Caco-2 (cell line): ENCODE measurements at regions of chr19 and their contacts with region 1.

Region 1: DNA sequence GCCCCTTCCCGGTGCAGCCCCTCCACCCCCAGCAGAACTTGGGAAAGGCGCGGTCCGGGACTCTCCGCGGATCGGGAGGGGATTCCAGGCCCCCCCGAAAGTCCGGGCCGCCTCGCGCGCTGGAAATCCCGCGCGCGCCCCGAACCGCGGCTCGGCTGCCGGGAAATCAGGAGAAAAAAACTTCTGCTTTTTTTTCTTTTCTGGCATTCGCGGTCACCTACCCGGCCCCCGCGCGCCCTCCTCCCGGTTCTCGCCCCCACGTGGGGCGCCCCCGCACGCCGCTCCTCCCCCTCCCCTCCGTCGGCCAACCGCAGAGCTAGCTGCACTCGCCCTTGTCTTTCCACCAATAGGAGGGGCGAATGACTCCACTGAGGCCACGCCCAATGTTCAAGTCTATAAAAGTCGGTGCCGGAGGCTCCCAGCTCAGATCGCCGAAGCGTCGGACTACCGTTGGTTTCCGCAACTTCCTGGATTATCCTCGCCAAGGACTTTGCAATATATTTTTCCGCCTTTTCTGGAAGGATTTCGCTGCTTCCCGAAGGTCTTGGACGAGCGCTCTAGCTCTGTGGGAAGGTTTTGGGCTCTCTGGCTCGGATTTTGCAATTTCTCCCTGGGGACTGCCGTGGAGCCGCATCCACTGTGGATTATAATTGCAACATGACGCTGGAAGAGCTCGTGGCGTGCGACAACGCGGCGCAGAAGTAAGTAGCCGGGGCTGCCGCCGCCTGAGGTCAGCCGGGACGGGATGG is at the start of gene GADD45B:
- DNase-seq: peak; percentile 98
- H3K4me3 ChIP-seq: peak within 1 kb of the TSS; percentile 79
- H3K4me3 Mint-ChIP-seq: peak within 1 kb of the TSS; percentile 88
- H3K27ac Mint-ChIP-seq: peak within 1 kb of the TSS; percentile 91
- H3K4me1 ChIP-seq: no peaks in the 10 kb centered on the region
- H3K4me1 Mint-ChIP-seq: no peaks in the 10 kb centered on the region
- H3K27me3 ChIP-seq: no peaks in the 10 kb centered on the region
- H3K27me3 Mint-ChIP-seq: no peaks in the 10 kb centered on the region
- CTCF ChIP-seq: no peak
- total RNA-seq, gene GADD45B: 20.2 and 23.8 TPM in 2 replicates

Region 2: DNA sequence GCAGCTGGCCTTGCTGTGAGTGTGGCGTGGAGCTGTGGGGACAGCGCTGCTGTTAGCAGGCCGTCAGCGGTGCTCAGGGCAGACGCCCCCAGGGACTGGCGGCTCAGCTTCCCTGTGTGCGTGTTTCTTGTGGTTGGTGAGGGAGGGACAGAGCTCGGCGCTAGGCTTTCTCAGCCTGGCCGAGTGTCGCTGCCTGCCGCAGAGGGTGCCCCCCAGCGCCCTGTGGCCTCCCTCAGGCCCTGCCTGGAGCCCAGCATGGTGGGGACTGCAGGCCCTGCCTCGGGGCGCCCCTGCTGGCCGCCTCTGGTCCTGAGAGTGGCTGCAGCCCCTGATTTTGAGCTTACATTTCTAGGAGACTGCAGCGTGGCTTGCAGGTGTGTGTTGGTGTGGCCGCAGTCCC is 276.7 kb before region 1 on chr19:
- CTCF ChIA-PET with region 1: no interaction called
- POLR2A ChIA-PET with region 1: no interaction called
- intact Hi-C with region 1: no loop called
- DNase-seq: no peak
- H3K4me3 ChIP-seq: no peak overlapping the region
- H3K4me3 Mint-ChIP-seq: no peak overlapping the region
- H3K27ac Mint-ChIP-seq: no peak overlapping the region
- H3K4me1 ChIP-seq: no peaks in the 10 kb centered on the region
- H3K4me1 Mint-ChIP-seq: no peaks in the 10 kb centered on the region
- H3K27me3 ChIP-seq: no peaks in the 10 kb centered on the region
- H3K27me3 Mint-ChIP-seq: no peaks in the 10 kb centered on the region
- CTCF ChIP-seq: no peak

Region 3: GRCh38 chr19:2427429-2428320 is 48.2 kb before region 1 on chr19 and contains the start of gene TIMM13:
- CTCF ChIA-PET with region 1: no interaction called
- POLR2A ChIA-PET with region 1: interaction called, 15 read pairs
- intact Hi-C with region 1: no loop called
- DNase-seq: peak; percentile 96
- H3K4me3 ChIP-seq: peak within 1 kb of the TSS; percentile 68
- H3K4me3 Mint-ChIP-seq: peak within 1 kb of the TSS; percentile 93
- H3K27ac Mint-ChIP-seq: peak within 1 kb of the TSS; percentile 100
- H3K4me1 ChIP-seq: peaks cover 20% of the 10 kb centered on the region
- H3K4me1 Mint-ChIP-seq: peaks cover 5% of the 10 kb centered on the region
- H3K27me3 ChIP-seq: no peaks in the 10 kb centered on the region
- H3K27me3 Mint-ChIP-seq: no peaks in the 10 kb centered on the region
- CTCF ChIP-seq: no peak
- total RNA-seq, gene TIMM13: 200 and 217 TPM in 2 replicates

Region 4: DNA sequence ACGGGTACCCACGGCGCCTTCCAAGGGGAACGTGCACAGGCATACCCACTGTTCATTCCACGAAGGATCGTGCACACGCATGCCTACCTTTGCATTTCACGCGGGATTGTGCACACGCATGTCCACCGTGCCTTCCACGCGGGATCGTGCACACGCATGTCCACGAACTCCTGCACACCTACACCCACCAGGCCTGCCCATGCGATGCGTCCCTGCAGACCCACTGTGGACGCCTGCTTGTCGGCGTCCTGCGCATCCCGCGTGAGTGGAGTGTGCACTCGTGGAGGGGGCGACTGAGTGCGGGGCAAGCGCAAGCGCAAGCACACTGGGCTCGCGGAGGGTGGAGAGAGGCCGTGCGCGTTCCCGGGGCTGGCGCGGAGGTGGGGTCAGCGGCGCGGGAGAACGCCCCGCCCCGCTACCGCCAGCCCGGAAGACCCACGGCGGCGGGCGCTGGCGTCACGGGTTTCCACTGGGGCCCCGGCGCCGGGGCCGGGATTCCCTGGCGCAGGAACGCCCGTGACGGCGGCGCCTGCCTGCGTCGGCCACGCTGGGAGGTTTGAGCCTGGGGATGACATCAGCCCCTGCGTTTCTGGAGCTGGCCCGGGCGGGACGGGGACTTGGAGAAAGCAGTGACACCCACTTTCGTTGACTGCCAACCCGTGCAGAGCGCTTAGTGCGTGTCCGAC is 18.7 kb after region 1 on chr19:
- CTCF ChIA-PET with region 1: no interaction called
- POLR2A ChIA-PET with region 1: interaction called, 15 read pairs
- intact Hi-C with region 1: no loop called
- DNase-seq: no peak
- H3K4me3 ChIP-seq: peak overlapping the region; percentile 33
- H3K4me3 Mint-ChIP-seq: peak overlapping the region; percentile 15
- H3K27ac Mint-ChIP-seq: no peak overlapping the region
- H3K4me1 ChIP-seq: peaks cover 34% of the 10 kb centered on the region
- H3K4me1 Mint-ChIP-seq: peaks cover 9% of the 10 kb centered on the region
- H3K27me3 ChIP-seq: no peaks in the 10 kb centered on the region
- H3K27me3 Mint-ChIP-seq: no peaks in the 10 kb centered on the region
- CTCF ChIP-seq: no peak

Region 5: DNA sequence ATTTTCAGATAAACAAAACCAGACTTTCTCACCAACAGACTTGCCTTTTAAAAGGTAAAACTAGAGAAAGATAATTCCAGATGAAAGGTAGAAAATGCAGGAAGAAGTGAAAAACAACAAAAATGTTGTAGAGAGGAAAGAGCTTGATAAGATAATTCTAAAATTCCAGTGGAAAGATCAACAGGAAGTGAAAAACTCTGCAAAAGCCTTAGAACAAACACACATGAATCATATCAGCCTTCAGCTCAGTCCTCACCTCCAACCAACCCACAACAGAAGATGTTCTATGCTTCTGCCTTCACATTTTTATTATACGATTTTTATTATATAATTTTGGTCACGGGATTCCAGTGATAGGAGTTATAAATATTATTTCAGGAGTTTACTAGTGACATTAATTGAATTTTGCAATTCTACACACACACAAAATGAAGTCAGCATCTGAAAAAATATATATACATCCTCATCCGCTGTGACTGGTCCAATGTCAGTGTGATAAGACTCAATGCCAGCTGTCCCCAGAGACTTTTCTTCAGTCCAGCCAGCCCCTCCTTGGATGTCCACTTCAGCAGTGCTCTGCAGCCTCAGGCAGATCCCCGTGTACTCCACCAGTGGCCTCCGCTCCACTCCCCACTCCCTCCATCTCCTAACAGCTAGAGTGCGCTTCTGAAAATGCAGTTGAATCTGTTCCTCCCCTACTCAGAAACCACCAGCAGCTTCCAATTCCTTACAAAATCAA is 58.0 kb after region 1 on chr19:
- CTCF ChIA-PET with region 1: no interaction called
- POLR2A ChIA-PET with region 1: interaction called, 23 read pairs
- intact Hi-C with region 1: loop called (anchors 5 kb)
- DNase-seq: no peak
- H3K4me3 ChIP-seq: no peak overlapping the region
- H3K4me3 Mint-ChIP-seq: no peak overlapping the region
- H3K27ac Mint-ChIP-seq: peak overlapping the region; percentile 92
- H3K4me1 ChIP-seq: peaks cover 50% of the 10 kb centered on the region
- H3K4me1 Mint-ChIP-seq: peaks cover 40% of the 10 kb centered on the region
- H3K27me3 ChIP-seq: no peaks in the 10 kb centered on the region
- H3K27me3 Mint-ChIP-seq: no peaks in the 10 kb centered on the region
- CTCF ChIP-seq: no peak

Region 6: DNA sequence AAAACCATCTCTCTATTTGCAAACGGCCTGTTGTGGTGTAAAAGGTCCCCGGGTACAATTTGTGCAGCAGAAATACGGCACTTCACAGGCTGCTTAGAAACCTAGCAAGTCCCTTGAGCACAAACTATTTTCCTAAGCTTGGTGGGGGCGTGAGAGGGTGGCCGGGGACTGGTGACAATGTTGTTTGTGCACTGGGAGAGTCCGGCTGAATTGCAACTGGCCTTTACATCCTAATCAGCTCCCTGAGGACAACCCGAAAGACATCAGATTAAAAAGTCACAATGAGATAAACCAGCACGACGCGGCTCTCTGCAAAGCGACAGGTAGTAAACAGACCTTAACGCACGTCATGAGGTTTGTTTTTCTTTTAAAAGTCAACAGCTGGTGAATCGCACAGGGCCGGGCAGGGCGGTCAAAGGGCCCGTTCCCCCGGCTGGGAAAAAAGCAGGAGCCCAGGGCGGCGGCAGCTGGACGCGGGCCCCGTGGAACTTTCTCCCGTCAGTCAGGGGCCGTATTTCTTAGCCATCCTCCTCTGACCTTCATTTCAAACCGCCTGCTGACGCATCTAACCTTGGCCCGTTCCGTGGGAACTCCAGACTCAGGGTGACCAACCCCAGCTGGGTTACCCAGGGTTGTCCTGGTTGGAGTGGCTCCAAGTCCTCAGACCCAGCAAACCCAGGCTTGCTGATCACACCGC is 112.4 kb after region 1 on chr19:
- CTCF ChIA-PET with region 1: interaction called, 5 read pairs
- POLR2A ChIA-PET with region 1: interaction called, 15 read pairs
- intact Hi-C with region 1: no loop called
- DNase-seq: peak; percentile 58 to 61
- H3K4me3 ChIP-seq: 0 out of 2 replicates have a peak overlapping the region, but pooled peaks have one; percentile 20
- H3K4me3 Mint-ChIP-seq: peak overlapping the region; percentile 52
- H3K27ac Mint-ChIP-seq: peak overlapping the region; percentile 53
- H3K4me1 ChIP-seq: peaks cover 32% of the 10 kb centered on the region
- H3K4me1 Mint-ChIP-seq: peaks cover 34% of the 10 kb centered on the region
- H3K27me3 ChIP-seq: no peaks in the 10 kb centered on the region
- H3K27me3 Mint-ChIP-seq: no peaks in the 10 kb centered on the region
- CTCF ChIP-seq: no peak

Region 7: GRCh38 chr19:2887391-2887914 is 411.6 kb after region 1 on chr19:
- CTCF ChIA-PET with region 1: interaction called, 3 read pairs
- POLR2A ChIA-PET with region 1: interaction called, 10 read pairs
- intact Hi-C with region 1: no loop called
- DNase-seq: peak in 1 of 2 experiments; percentile 60
- H3K4me3 ChIP-seq: peak overlapping the region; percentile 10; the same call in 1 of the 2 replicates
- H3K4me3 Mint-ChIP-seq: peak overlapping the region; percentile 66
- H3K27ac Mint-ChIP-seq: peak overlapping the region; percentile 59
- H3K4me1 ChIP-seq: 0 out of 2 replicates have a peak, but pooled peaks cover 5% of the 10 kb centered on the region
- H3K4me1 Mint-ChIP-seq: peaks cover 11% of the 10 kb centered on the region
- H3K27me3 ChIP-seq: no peaks in the 10 kb centered on the region
- H3K27me3 Mint-ChIP-seq: no peaks in the 10 kb centered on the region
- CTCF ChIP-seq: peak; percentile 58 to 65